MCF 10A (cell line): ENCODE measurements at regions of chr1 and their contacts with region 1.

Region 1: GRCh38 chr1:153633716-153634665 is at the start of gene CHTOP:
- DNase-seq: peak; percentile 99
- H3K4me3 Mint-ChIP-seq: peak within 1 kb of the TSS; percentile 97
- H3K27ac Mint-ChIP-seq: peak within 1 kb of the TSS; percentile 100
- H3K4me1 Mint-ChIP-seq: peaks cover 32% of the 10 kb centered on the region
- H3K27me3 Mint-ChIP-seq: no peaks in the 10 kb centered on the region
- CTCF ChIP-seq: no peak
- total RNA-seq, gene CHTOP: 147 and 156 TPM in 2 replicates

Region 2: GRCh38 chr1:153526132-153526543 is 107.9 kb before region 1 on chr1:
- CTCF ChIA-PET with region 1: interaction called, 4 read pairs
- POLR2A ChIA-PET with region 1: interaction called, 17 read pairs
- intact Hi-C with region 1: no loop called
- DNase-seq: peak; percentile 94
- H3K4me3 Mint-ChIP-seq: peak overlapping the region; percentile 29
- H3K27ac Mint-ChIP-seq: peak overlapping the region; percentile 85
- H3K4me1 Mint-ChIP-seq: peaks cover 38% of the 10 kb centered on the region
- H3K27me3 Mint-ChIP-seq: no peaks in the 10 kb centered on the region
- CTCF ChIP-seq: no peak

Region 3: GRCh38 chr1:153598309-153599172 is 35.5 kb before region 1 on chr1:
- CTCF ChIA-PET with region 1: no interaction called
- POLR2A ChIA-PET with region 1: interaction called, 1,272 read pairs
- intact Hi-C with region 1: no loop called
- DNase-seq: no peak
- H3K4me3 Mint-ChIP-seq: no peak overlapping the region
- H3K27ac Mint-ChIP-seq: peak overlapping the region; percentile 14
- H3K4me1 Mint-ChIP-seq: peaks cover 12% of the 10 kb centered on the region
- H3K27me3 Mint-ChIP-seq: no peaks in the 10 kb centered on the region
- CTCF ChIP-seq: no peak

Region 4: GRCh38 chr1:153649863-153650235 is 15.9 kb after region 1 on chr1:
- CTCF ChIA-PET with region 1: interaction called, 4 read pairs
- POLR2A ChIA-PET with region 1: interaction called, 1,272 read pairs
- intact Hi-C with region 1: no loop called
- DNase-seq: peak; percentile 54
- H3K4me3 Mint-ChIP-seq: no peak overlapping the region
- H3K27ac Mint-ChIP-seq: peak overlapping the region; percentile 10
- H3K4me1 Mint-ChIP-seq: peaks cover 13% of the 10 kb centered on the region
- H3K27me3 Mint-ChIP-seq: no peaks in the 10 kb centered on the region
- CTCF ChIP-seq: no peak

Region 5: DNA sequence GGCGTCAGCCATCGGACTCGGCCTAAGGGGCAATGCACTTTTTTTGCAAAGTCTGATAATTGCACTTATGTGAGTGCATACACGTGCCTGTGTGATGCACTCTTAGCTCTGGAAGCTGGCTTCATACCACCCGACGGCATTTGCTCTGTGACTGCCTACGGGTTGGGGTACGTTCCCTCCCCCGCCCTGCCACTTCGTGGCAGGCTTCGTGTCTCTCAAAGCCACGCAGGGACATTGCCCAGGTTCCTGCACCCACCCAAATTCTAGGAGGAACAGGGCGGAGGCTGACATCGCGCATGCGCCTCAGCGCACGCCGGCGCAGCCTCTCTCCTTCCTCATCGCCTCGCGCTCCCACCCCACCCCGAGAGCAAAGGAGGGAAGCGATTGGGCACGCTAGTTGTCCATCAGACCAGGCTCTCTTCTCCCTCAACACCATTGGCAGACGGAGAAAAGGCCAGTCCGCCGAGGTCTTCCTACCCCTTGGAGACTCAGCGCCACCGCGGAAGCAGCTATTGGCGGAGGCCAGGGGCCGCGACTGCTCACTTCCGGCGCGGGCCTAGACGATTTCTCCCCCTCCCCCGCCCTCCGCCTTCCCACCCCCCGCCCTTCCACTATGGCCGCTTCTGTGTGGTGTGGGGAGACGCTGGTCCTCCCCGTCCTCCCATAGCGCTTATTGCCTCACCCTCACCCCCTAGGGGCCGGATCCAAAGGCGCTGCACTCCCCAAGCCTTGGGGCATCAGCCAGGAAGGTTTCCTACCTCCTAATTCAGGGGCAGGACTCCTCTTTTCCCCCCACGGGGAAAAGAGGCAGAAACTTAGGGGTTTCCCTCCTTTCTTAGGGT is 93.7 kb after region 1 on chr1 and contains the start of gene INTS3:
- CTCF ChIA-PET with region 1: no interaction called
- POLR2A ChIA-PET with region 1: interaction called, 13 read pairs
- intact Hi-C with region 1: no loop called
- DNase-seq: peak; percentile 100
- H3K4me3 Mint-ChIP-seq: peak within 1 kb of the TSS; percentile 99
- H3K27ac Mint-ChIP-seq: peak within 1 kb of the TSS; percentile 98
- H3K4me1 Mint-ChIP-seq: peaks cover 21% of the 10 kb centered on the region
- H3K27me3 Mint-ChIP-seq: no peaks in the 10 kb centered on the region
- CTCF ChIP-seq: no peak
- total RNA-seq, gene INTS3: 68.7 and 88.3 TPM in 2 replicates

Region 6: DNA sequence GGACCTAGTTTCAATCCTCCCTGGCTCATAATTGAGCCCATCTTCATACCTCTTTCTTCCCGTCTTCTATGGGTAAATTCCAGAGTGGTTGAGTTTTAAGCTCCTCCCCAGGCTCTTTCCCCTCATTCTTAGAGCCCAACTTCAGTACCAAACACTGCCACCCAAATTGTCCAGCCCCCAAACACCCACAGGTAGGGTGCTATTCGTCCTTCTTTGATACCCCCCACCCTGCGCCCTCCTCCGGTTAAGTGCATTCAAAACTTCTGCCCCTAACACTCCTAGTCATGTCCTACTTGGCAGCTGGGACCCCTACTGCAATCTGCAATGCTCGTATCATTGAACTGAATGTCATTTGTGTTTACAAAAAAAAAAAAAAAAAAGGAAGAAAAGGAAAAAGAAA is 175.4 kb after region 1 on chr1:
- CTCF ChIA-PET with region 1: no interaction called
- POLR2A ChIA-PET with region 1: no interaction called
- intact Hi-C with region 1: no loop called
- DNase-seq: no peak
- H3K4me3 Mint-ChIP-seq: no peak overlapping the region
- H3K27ac Mint-ChIP-seq: no peak overlapping the region
- H3K4me1 Mint-ChIP-seq: peaks cover 27% of the 10 kb centered on the region
- H3K27me3 Mint-ChIP-seq: no peaks in the 10 kb centered on the region
- CTCF ChIP-seq: no peak

Region 7: GRCh38 chr1:153842006-153842471 is 208.0 kb after region 1 on chr1:
- CTCF ChIA-PET with region 1: no interaction called
- POLR2A ChIA-PET with region 1: no interaction called
- intact Hi-C with region 1: no loop called
- DNase-seq: peak; percentile 18
- H3K4me3 Mint-ChIP-seq: no peak overlapping the region
- H3K27ac Mint-ChIP-seq: peak overlapping the region; percentile 44
- H3K4me1 Mint-ChIP-seq: peaks cover 11% of the 10 kb centered on the region
- H3K27me3 Mint-ChIP-seq: no peaks in the 10 kb centered on the region
- CTCF ChIP-seq: no peak